ENCODE measurements at regions of chr15 and their contacts with region 1.

Region 1: GRCh38 chr15:65512807-65513416 is 4.6 kb downstream of the DPP8 start:
- DNase-seq: no peak
- H3K4me3 ChIP-seq: no peak overlapping the region
- H3K27ac ChIP-seq: no peak overlapping the region
- H3K4me1 ChIP-seq: peaks cover 13% of the 10 kb centered on the region
- CTCF ChIP-seq: no peak

Region 2: GRCh38 chr15:65377104-65377975 is 135.6 kb before region 1 on chr15:
- CTCF ChIA-PET with region 1: no interaction called
- POLR2A ChIA-PET with region 1: interaction called, 10 read pairs
- intact Hi-C with region 1: no loop called
- DNase-seq: no peak
- H3K4me3 ChIP-seq: no peak overlapping the region
- H3K27ac ChIP-seq: no peak overlapping the region
- H3K4me1 ChIP-seq: no peaks in the 10 kb centered on the region
- CTCF ChIP-seq: no peak

Region 3: DNA sequence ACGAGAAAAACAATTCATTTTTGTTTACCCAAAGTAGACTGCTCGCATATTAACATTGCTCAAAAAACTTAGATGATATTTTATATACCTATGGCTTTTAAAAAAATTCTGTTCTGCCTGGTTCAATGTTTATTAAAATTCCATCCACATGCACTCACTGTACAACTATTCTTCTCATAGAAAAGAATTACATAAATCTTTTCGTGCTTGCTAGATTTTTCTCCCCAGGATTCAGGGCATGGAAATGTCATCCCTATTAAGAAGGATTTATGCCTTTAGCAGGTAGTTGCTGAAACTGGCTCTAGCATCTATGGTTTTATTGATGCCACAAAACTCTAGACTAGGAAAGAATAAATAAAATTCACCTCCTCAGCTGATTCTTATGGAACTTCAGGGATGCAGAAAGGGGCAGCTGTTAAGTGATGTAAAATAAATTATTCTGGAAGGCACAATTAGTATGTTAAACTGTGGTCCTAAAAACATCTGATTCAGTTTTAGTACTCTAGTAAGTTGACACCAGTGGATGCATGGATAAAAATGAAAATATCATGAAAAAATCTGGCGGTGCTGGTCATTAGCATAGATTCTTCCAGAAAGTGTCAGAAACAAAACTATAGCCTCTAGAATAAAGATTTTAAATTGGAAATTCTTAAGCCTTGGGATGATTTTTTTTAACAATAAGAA is 1699.9 kb after region 1 on chr15:
- CTCF ChIA-PET with region 1: no interaction called
- POLR2A ChIA-PET with region 1: no interaction called
- intact Hi-C with region 1: no loop called
- DNase-seq: no peak
- H3K4me3 ChIP-seq: no peak overlapping the region
- H3K27ac ChIP-seq: no peak overlapping the region
- H3K4me1 ChIP-seq: peaks cover 4% of the 10 kb centered on the region
- CTCF ChIP-seq: no peak